PC-3 (cell line): ENCODE measurements at regions of chr10 and their contacts with region 1.

Region 1: GRCh38 chr10:74542065-74542464 is 284.3 kb upstream of the KAT6B start:
- DNase-seq: no peak
- ATAC-seq: peak; percentile 29; the same call in 1 of the 2 replicates
- H3K4me3 ChIP-seq: no peak overlapping the region
- H3K27ac ChIP-seq: no peak overlapping the region
- H3K4me1 ChIP-seq: no peaks in the 10 kb centered on the region
- H3K27me3 ChIP-seq: no peaks in the 10 kb centered on the region
- CTCF ChIP-seq: no peak

Region 2: GRCh38 chr10:74453169-74453568 is 88.9 kb before region 1 on chr10:
- CTCF ChIA-PET with region 1: no interaction called
- POLR2A ChIA-PET with region 1: no interaction called
- intact Hi-C with region 1: loop called (anchors 5 kb)
- DNase-seq: no peak
- ATAC-seq: no peak
- H3K4me3 ChIP-seq: no peak overlapping the region
- H3K27ac ChIP-seq: no peak overlapping the region
- H3K4me1 ChIP-seq: no peaks in the 10 kb centered on the region
- H3K27me3 ChIP-seq: no peaks in the 10 kb centered on the region
- CTCF ChIP-seq: no peak